Keratinocyte (primary cell): ENCODE measurements at regions of chr17 and their contacts with region 1.

Region 1: GRCh38 chr17:30196504-30196903 is 39.0 kb downstream of the SLC6A4 start:
- DNase-seq: no peak
- H3K4me3 ChIP-seq: no peak overlapping the region
- H3K27ac ChIP-seq: no peak overlapping the region
- H3K4me1 ChIP-seq: no peaks in the 10 kb centered on the region
- H3K27me3 ChIP-seq: peaks cover 12% of the 10 kb centered on the region
- CTCF ChIP-seq: no peak

Region 2: GRCh38 chr17:30084788-30085187 is 111.7 kb before region 1 on chr17:
- dilution Hi-C with region 1: no loop called
- DNase-seq: no peak
- H3K4me3 ChIP-seq: no peak overlapping the region
- H3K27ac ChIP-seq: no peak overlapping the region
- H3K4me1 ChIP-seq: no peaks in the 10 kb centered on the region
- H3K27me3 ChIP-seq: peaks cover 10% of the 10 kb centered on the region
- CTCF ChIP-seq: no peak

Region 3: GRCh38 chr17:30323895-30324319 is 127.4 kb after region 1 on chr17:
- dilution Hi-C with region 1: loop called (anchors 10 kb)
- DNase-seq: no peak
- H3K4me3 ChIP-seq: no peak overlapping the region
- H3K27ac ChIP-seq: no peak overlapping the region
- H3K4me1 ChIP-seq: peaks cover 16% of the 10 kb centered on the region
- H3K27me3 ChIP-seq: peaks cover 31% of the 10 kb centered on the region
- CTCF ChIP-seq: no peak